ENCODE measurements at regions of chr15 and their contacts with region 1.

Region 1: GRCh38 chr15:90064911-90065681 is 37.2 kb downstream of the IDH2 start:
- DNase-seq: peak; percentile 78
- ATAC-seq: peak; percentile 54 to 68

Region 2: GRCh38 chr15:89912674-89913396 is 152.3 kb before region 1 on chr15 and contains the start of gene ARPIN:
- intact Hi-C with region 1: loop called in 1 of 2 experiments (anchors 5 kb)
- DNase-seq: peak; percentile 73
- ATAC-seq: peak; percentile 91 to 92
- total RNA-seq, gene ARPIN: 10.2 to 13.4 TPM

Region 3: GRCh38 chr15:90020021-90020735 is 44.9 kb before region 1 on chr15:
- intact Hi-C with region 1: no loop called
- DNase-seq: no peak
- ATAC-seq: peak; percentile 78 to 81

Region 4: DNA sequence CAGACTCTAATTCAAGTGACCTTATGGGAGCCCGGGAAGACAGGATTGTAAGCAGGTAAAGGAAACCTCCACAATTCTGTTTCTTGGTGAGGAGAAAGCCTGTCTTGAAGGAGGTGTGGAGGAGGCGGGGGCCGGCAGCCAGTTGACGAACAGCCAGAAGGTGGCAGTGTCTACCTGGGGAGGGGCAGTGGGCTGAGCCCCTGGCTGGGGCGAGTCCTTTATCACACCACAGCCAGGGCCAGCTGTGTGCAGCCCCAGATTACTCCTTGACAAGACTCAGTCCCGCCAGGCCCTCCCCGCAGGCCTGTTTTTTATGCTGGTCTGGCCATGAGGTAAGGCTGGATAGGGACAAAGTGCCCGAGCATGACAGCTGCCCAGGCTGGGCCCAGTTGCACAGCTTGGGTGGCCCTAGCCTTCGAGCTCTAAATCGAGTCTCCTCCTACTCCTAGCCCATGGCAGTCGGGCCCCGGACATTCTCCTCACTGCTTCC is 78.1 kb after region 1 on chr15:
- intact Hi-C with region 1: no loop called
- DNase-seq: peak; percentile 56
- ATAC-seq: peak; percentile 76 to 80